PC-9 (cell line): ENCODE measurements at regions of chr4 and their contacts with region 1.

Region 1: GRCh38 chr4:147617173-147617840 is at the start of gene TMEM184C:
- DNase-seq: peak; percentile 86 to 97
- H3K4me3 ChIP-seq: peak within 1 kb of the TSS; percentile 84
- H3K27ac ChIP-seq: peak within 1 kb of the TSS; percentile 44
- H3K4me1 ChIP-seq: no peaks in the 10 kb centered on the region; the same call in 1 of the 2 replicates
- H3K27me3 ChIP-seq: no peaks in the 10 kb centered on the region
- CTCF ChIP-seq: no peak
- total RNA-seq, gene TMEM184C: 29.1 and 40.4 TPM in 2 replicates

Region 2: GRCh38 chr4:147683717-147684700 is 66.7 kb after region 1 on chr4 and contains the start of gene PRMT9:
- CTCF ChIA-PET with region 1: no interaction called
- POLR2A ChIA-PET with region 1: no interaction called
- intact Hi-C with region 1: loop called (anchors 5 kb)
- DNase-seq: peak; percentile 69 to 89
- H3K4me3 ChIP-seq: peak within 1 kb of the TSS; percentile 82
- H3K27ac ChIP-seq: peak within 1 kb of the TSS; percentile 59
- H3K4me1 ChIP-seq: peaks cover 8% of the 10 kb centered on the region; the same call in 1 of the 2 replicates
- H3K27me3 ChIP-seq: no peaks in the 10 kb centered on the region
- CTCF ChIP-seq: no peak
- total RNA-seq, gene PRMT9: 8.4 and 9.0 TPM in 2 replicates